ENCODE measurements at regions of chr6 and their contacts with region 1.

Region 1: DNA sequence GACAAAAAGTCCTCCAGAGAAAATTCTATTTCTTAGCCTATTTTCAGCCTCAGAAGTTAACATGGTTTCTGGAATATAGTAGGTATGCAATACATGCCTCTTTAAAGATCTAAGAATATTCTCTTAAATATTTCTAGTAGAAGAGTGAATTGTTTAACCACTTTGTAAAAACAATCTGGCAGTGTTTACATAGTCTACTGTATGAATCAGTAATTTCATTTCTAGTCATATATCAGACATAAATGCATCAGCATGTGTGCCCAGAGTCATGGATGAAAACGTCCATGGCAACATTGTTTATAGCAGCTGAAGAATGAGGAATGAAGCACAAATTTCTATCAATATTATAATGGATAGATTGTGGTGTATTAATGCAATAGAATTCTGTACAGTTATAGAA is 124.9 kb downstream of the NKAIN2 start:
- DNase-seq: no peak
- H3K4me3 ChIP-seq: no peak overlapping the region
- H3K27ac ChIP-seq: no peak overlapping the region
- H3K4me1 ChIP-seq: no peaks in the 10 kb centered on the region
- H3K27me3 ChIP-seq: no peaks in the 10 kb centered on the region
- CTCF ChIP-seq: no peak
- POLR2A ChIP-seq: no peak

Region 2: DNA sequence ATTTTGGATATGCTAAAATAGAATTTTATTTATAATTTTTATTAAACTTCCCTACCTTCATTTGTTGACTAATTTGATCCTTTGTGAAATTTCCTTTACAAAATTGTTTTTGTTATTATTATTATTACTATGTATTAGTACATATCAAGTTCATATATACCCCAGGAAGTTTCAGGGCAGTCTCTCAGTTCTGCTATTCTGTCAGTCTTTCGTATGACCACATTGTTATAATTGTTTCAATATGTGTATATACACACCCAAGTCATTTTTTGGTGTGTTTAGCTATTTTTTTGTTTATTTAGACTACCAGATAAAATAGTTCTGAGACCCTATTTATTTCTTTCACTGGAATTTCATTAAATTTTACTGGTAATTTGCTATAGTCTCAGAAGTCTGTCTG is 52.7 kb before region 1 on chr6:
- intact Hi-C with region 1: loop called (anchors 2 kb)
- DNase-seq: no peak
- H3K4me3 ChIP-seq: no peak overlapping the region
- H3K27ac ChIP-seq: no peak overlapping the region
- H3K4me1 ChIP-seq: no peaks in the 10 kb centered on the region
- H3K27me3 ChIP-seq: no peaks in the 10 kb centered on the region
- CTCF ChIP-seq: no peak
- POLR2A ChIP-seq: no peak